Transverse colon (tissue), 4 donors: ENCODE measurements at regions of chr4 and their contacts with region 1.

Region 1: DNA sequence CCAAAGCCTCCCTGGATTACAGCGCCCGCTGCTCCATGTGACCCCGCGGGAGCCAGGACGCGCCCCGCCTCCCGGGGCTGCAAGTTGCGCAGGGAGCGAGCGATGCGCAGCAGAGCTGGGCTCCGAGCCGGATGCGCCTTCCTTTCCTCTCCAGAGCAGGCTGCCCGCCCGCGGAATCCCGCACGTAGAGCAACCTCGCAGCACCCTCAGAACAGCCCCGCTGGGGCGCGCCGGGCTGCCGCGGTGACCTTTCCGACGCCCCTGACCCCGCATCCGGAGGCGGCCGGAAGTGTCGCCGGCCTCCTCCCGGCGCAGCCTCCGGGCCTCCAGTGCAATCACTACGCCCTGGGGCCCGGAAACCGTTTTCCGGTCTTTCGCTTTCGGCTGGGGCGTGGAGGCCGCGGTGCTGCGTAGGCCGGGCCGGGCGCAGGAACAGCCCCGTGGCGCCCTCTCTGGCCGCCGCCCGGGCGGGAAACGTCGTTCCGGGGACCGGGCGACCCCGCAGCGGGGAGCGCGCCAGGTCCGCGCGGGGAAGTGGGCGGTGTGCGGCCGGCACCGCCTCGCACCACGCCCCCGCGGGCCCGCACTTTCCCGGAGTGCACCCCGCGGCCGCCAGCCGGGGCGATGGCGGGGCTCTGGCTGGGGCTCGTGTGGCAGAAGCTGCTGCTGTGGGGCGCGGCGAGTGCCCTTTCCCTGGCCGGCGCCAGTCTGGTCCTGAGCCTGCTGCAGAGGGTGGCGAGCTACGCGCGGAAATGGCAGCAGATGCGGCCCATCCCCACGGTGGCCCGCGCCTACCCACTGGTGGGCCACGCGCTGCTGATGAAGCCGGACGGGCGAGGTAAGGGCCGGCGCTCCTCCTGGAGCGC is at the start of gene CYP4V2:
- DNase-seq: peak; percentile 92
- H3K4me3 ChIP-seq: peak within 1 kb of the TSS; percentile 44 to 93 (median 68)
- H3K27ac ChIP-seq: peak within 1 kb of the TSS; percentile 93 to 99 (median 96)
- H3K4me1 ChIP-seq: peaks cover 11 to 37% (median 27%) of the 10 kb centered on the region in 4 donors
- H3K27me3 ChIP-seq: no peaks in the 10 kb centered on the region
- CTCF ChIP-seq: peak in 1 of 5 experiments; percentile 41
- EP300 ChIP-seq: no peak
- POLR2A ChIP-seq: peak; percentile 88
- total RNA-seq, gene CYP4V2: 44.0 to 83.8 (median 61.3) TPM

Region 2: DNA sequence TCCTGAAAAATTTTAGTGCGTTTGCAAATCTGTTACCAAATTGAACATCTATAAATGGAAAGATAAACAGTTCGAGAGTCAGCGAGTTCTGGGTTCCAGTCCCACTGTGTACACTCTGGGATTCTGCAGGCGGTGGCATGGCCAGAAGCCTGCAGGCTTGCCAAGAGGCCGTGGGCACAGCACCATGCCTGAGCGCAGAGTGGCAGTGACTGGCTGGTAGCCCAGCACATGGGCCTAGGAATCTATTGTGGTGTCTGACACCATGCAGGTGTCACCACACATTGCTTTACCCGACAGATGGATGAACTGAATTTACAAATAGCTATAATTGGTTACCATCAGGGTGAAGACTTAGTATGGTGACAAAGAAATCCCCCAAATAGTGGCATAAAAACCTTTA is 194.1 kb before region 1 on chr4:
- in situ Hi-C with region 1: no loop called
- intact Hi-C with region 1: no loop called
- DNase-seq: no peak
- H3K4me3 ChIP-seq: no peak overlapping the region
- H3K27ac ChIP-seq: no peak overlapping the region
- H3K4me1 ChIP-seq: no peaks in the 10 kb centered on the region
- H3K27me3 ChIP-seq: no peaks in the 10 kb centered on the region
- CTCF ChIP-seq: no peak
- EP300 ChIP-seq: no peak
- POLR2A ChIP-seq: no peak

Region 3: DNA sequence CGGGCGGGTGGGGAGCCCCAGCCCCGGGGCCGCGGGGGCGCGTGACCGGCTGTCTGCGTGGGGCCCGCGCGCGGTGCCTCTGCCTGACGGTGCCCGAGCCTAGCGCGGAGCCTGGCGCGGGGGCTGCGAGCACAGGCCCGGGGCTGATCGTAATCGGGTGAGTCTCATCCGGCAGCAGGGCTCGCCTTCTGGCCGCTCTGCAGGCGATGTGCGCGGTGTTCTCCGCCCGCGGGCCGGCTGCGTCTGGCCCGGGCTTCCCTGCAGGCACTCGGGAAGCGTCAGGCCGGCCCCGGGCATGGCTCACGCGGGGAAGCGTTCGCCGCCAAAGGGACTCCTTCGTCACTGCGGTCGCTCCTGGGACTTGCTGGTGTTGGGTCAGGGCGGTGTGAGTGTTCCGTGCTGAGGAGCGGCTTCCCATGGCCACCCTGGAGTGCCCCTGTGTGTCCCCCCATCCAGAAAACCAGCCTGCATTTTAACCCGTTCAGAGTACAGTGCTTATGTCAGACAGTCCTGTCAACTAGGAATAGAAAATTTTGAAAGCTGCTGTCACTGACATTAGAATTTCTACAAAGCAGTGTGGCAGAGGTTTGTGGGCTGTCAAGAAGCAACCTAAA is 46.4 kb before region 1 on chr4:
- in situ Hi-C with region 1: no loop called
- intact Hi-C with region 1: loop called (anchors 5 kb)
- DNase-seq: peak; percentile 44
- H3K4me3 ChIP-seq: peak overlapping the region; percentile 44 to 56 (median 50)
- H3K27ac ChIP-seq: peak overlapping the region; percentile 74 to 90 (median 79)
- H3K4me1 ChIP-seq: peaks cover 0 to 7% (median 5%) of the 10 kb centered on the region in 4 donors
- H3K27me3 ChIP-seq: no peaks in the 10 kb centered on the region
- CTCF ChIP-seq: no peak
- EP300 ChIP-seq: no peak
- POLR2A ChIP-seq: no peak